ENCODE measurements at regions of chr1 and their contacts with region 1.

Region 1: GRCh38 chr1:157878059-157878458 is 36.5 kb upstream of the CD5L start:
- DNase-seq: peak; percentile 29 to 45 (median 43)
- H3K4me3 ChIP-seq: no peak overlapping the region
- H3K4me3 Mint-ChIP-seq: no peak overlapping the region
- H3K27ac ChIP-seq: no peak overlapping the region
- H3K27ac Mint-ChIP-seq: no peak overlapping the region
- H3K4me1 ChIP-seq: peaks cover 10 to 14% of the 10 kb centered on the region in 2 donors
- H3K4me1 Mint-ChIP-seq: peaks cover 13% of the 10 kb centered on the region
- H3K27me3 ChIP-seq: peaks cover 3 to 4% of the 10 kb centered on the region in 2 donors
- H3K27me3 Mint-ChIP-seq: peaks cover 1 to 4% (median 3%) of the 10 kb centered on the region in 3 donors
- CTCF ChIP-seq: peak; percentile 64

Region 2: GRCh38 chr1:157862114-157863070 is 15.7 kb before region 1 on chr1:
- intact Hi-C with region 1: no loop called
- DNase-seq: peak in 1 of 3 donors; percentile 17
- H3K4me3 ChIP-seq: no peak overlapping the region
- H3K4me3 Mint-ChIP-seq: no peak overlapping the region
- H3K27ac ChIP-seq: no peak overlapping the region
- H3K27ac Mint-ChIP-seq: no peak overlapping the region
- H3K4me1 ChIP-seq: no peaks in the 10 kb centered on the region
- H3K4me1 Mint-ChIP-seq: peaks cover 3% of the 10 kb centered on the region
- H3K27me3 ChIP-seq: peaks cover 0 to 8% of the 10 kb centered on the region in 2 donors
- H3K27me3 Mint-ChIP-seq: peaks cover 0 to 11% (median 1%) of the 10 kb centered on the region in 3 donors
- CTCF ChIP-seq: no peak

Region 3: GRCh38 chr1:157948312-157949073 is 70.4 kb after region 1 on chr1:
- intact Hi-C with region 1: loop called (anchors 5 to 10 kb)
- DNase-seq: peak; percentile 42 to 55 (median 54)
- H3K4me3 ChIP-seq: no peak overlapping the region
- H3K4me3 Mint-ChIP-seq: no peak overlapping the region
- H3K27ac ChIP-seq: no peak overlapping the region
- H3K27ac Mint-ChIP-seq: no peak overlapping the region
- H3K4me1 ChIP-seq: peaks cover 23 to 29% of the 10 kb centered on the region in 2 donors
- H3K4me1 Mint-ChIP-seq: peaks cover 38% of the 10 kb centered on the region
- H3K27me3 ChIP-seq: peaks cover 0 to 7% of the 10 kb centered on the region in 2 donors
- H3K27me3 Mint-ChIP-seq: peaks cover 3 to 20% (median 11%) of the 10 kb centered on the region in 3 donors
- CTCF ChIP-seq: peak; percentile 69